OCI-LY7 (cell line): ENCODE measurements at regions of chr6 and their contacts with region 1.

Region 1: DNA sequence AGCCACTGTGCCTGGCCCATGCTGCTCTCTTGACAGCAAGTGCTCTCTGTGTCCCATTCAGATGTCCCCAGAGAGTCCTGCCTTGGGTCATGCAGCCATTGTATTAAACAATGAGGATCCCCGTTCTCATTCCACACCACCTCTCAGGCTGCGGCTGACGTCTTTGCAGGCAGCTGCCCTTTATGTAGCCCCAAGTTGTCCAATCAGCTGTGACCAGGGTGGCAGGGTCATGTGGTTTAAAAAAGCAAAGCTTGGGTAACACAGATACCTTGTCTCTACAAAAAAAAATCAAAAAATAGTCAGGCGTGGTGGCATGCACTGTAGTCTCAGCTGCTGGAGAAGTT is 13.2 kb downstream of the GCNT2 start:
- DNase-seq: peak; percentile 87
- H3K4me3 ChIP-seq: peak overlapping the region; percentile 89
- H3K27ac ChIP-seq: peak overlapping the region; percentile 95
- H3K4me1 ChIP-seq: peaks cover 71% of the 10 kb centered on the region
- CTCF ChIP-seq: no peak

Region 2: DNA sequence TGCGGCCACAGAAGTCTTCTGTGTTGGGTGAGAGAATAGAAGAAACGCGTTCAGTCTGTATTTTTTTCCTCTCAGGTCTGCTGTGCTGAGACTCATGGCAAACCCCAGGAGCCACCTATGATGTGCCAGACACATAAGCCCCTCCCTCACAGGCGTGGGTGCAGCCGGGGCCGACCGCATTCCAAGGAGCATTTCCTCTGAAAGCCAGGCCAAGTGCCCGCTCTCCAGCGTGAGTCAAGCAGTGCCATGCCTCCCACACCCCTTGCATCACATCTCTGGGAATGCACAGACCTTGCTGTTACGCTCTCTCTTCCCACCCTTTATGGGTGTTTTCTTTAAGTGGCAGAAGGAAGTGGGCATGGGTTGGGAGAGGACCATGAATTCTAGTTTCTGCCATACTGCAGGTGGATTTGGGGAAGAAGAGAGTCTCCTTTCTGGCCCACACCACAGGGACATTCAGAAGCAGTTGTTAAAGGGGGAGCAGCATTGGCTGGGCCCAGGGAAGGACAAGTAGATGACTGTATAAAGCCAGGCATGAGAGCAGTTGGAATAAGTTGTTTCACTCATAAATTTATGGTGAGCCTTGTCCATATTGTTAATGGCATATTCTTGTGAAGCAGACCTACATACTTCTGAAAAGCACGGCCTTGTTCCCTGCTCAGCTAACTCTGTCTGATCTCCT is 82.4 kb before region 1 on chr6:
- CTCF ChIA-PET with region 1: no interaction called
- POLR2A ChIA-PET with region 1: no interaction called
- intact Hi-C with region 1: no loop called
- DNase-seq: no peak
- H3K4me3 ChIP-seq: no peak overlapping the region
- H3K27ac ChIP-seq: no peak overlapping the region
- H3K4me1 ChIP-seq: no peaks in the 10 kb centered on the region
- CTCF ChIP-seq: no peak

Region 3: GRCh38 chr6:10713962-10714361 is 179.6 kb after region 1 on chr6:
- CTCF ChIA-PET with region 1: no interaction called
- POLR2A ChIA-PET with region 1: interaction called, 10 read pairs
- intact Hi-C with region 1: no loop called
- DNase-seq: no peak
- H3K4me3 ChIP-seq: no peak overlapping the region
- H3K27ac ChIP-seq: no peak overlapping the region
- H3K4me1 ChIP-seq: no peaks in the 10 kb centered on the region
- CTCF ChIP-seq: no peak

Region 4: GRCh38 chr6:11093589-11094410 is 559.4 kb after region 1 on chr6 and contains the start of gene SMIM13:
- CTCF ChIA-PET with region 1: no interaction called
- POLR2A ChIA-PET with region 1: interaction called, 6 read pairs
- intact Hi-C with region 1: loop called (anchors 5 kb)
- DNase-seq: peak; percentile 97
- H3K4me3 ChIP-seq: peak within 1 kb of the TSS; percentile 72
- H3K27ac ChIP-seq: peak within 1 kb of the TSS; percentile 70
- H3K4me1 ChIP-seq: peaks cover 31% of the 10 kb centered on the region
- CTCF ChIP-seq: peak; percentile 56
- total RNA-seq, gene SMIM13: 13.9 and 16.4 TPM in 2 replicates